Dendritic cell treated with granulocyte-macrophage colony-stimulating factor and Interleukin-4, amounts not matched to agents 40 ng/mL and 50 ng/mL, for 4 days (primary cell): ENCODE measurements at regions of chr15 and their contacts with region 1.

Region 1: GRCh38 chr15:60635507-60636352 is 156.8 kb upstream of the ICE2 start:
- H3K4me3 Mint-ChIP-seq: peak overlapping the region; percentile 56
- H3K27ac Mint-ChIP-seq: peak overlapping the region; percentile 94
- H3K4me1 Mint-ChIP-seq: peaks cover 19% of the 10 kb centered on the region
- H3K27me3 Mint-ChIP-seq: peaks cover 8% of the 10 kb centered on the region

Region 2: DNA sequence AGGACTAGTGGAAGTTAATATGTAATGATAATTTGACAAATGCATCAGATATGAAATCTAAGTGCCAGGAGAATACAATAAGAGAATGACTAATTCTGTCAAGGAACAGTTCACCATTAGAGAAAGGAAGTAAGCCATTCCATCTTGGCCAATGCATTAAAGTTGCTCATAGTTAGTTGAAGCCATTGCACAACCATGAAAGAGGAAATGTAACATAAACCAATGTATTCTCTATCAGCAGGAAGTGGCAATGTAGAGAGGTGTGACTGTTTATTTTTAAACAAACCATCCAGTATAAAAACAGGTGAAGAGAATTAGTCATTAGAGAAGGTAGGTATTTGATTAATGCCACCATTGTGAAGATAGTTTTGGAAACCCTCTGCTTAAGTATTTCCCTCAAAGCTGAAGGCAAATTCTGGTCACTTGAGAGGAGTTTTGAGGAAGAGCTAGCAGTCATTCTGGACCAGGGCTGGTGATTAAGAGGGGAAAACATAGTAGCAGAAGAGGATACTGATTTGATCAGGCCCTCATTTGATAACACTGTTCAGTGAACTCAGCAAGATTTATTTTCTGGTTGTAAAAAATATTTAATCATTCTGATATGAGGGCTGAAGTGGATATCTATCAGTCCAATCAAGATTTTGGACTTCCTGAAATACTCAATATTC is 227.2 kb before region 1 on chr15:
- intact Hi-C with region 1: loop called (anchors 5 kb)
- H3K4me3 Mint-ChIP-seq: no peak overlapping the region
- H3K27ac Mint-ChIP-seq: peak overlapping the region; percentile 87
- H3K4me1 Mint-ChIP-seq: peaks cover 31% of the 10 kb centered on the region
- H3K27me3 Mint-ChIP-seq: no peaks in the 10 kb centered on the region

Region 3: GRCh38 chr15:60573936-60574335 is 61.8 kb before region 1 on chr15:
- intact Hi-C with region 1: no loop called
- H3K4me3 Mint-ChIP-seq: no peak overlapping the region
- H3K27ac Mint-ChIP-seq: no peak overlapping the region
- H3K4me1 Mint-ChIP-seq: no peaks in the 10 kb centered on the region
- H3K27me3 Mint-ChIP-seq: no peaks in the 10 kb centered on the region

Region 4: DNA sequence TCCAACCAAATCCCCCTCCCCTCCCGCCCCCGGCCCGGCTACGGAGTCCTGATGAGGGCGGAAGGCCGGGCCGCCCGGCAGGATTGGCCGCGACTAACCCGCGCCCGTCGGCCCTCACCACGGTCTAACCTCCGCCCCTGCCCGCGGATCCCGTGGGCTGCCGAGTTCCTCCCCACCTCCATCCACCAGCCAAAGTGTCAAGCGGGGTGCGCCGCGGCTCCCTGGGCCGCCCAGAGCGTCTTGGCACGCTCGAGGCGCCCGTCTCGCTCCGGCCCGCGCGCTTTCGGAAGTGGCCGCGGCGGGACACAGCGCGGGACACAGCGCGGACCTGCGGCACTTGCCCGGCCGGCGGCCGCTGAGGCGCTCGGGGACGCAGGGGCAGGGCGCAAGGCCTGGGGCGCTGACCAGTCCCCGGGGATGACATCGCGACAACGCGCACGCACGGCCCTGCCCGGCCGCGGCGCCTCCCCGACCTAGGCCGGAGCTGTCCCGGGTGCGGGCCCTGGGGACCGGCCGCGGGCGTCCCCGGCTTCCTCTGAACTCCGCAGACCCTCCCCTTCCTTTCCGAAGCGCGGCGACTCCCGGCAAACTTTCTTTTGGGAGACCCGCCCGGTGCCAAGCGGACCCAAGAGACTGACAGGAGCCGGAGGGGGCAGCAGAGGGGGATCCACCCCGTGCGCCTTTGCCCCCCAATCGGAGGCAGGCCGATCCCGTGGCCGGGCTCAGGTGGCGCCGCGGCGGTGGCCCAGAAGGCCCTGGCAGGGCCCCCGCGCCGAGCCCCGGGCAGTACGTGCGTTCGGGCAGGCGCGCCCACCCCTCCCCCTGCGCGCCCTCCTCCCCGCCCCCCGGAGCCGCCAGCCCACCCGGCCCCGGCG is 44.0 kb before region 1 on chr15:
- intact Hi-C with region 1: loop called (anchors 2 kb)
- H3K4me3 Mint-ChIP-seq: peak overlapping the region; percentile 74
- H3K27ac Mint-ChIP-seq: peak overlapping the region; percentile 9
- H3K4me1 Mint-ChIP-seq: peaks cover 4% of the 10 kb centered on the region
- H3K27me3 Mint-ChIP-seq: peaks cover 78% of the 10 kb centered on the region